PC-3 (cell line): ENCODE measurements at regions of chr4 and their contacts with region 1.

Region 1: GRCh38 chr4:73446336-73446938 is 10.4 kb downstream of the AFP start:
- DNase-seq: peak; percentile 83
- ATAC-seq: peak; percentile 74
- H3K4me3 ChIP-seq: no peak overlapping the region
- H3K27ac ChIP-seq: no peak overlapping the region
- H3K4me1 ChIP-seq: peaks cover 24% of the 10 kb centered on the region
- H3K27me3 ChIP-seq: peaks cover 12% of the 10 kb centered on the region; the same call in 1 of the 2 replicates
- CTCF ChIP-seq: peak; percentile 98

Region 2: GRCh38 chr4:73308286-73308685 is 138.2 kb before region 1 on chr4:
- CTCF ChIA-PET with region 1: interaction called, 7 read pairs
- POLR2A ChIA-PET with region 1: no interaction called
- intact Hi-C with region 1: loop called (anchors 1 kb)
- DNase-seq: peak; percentile 53
- ATAC-seq: peak; percentile 69
- H3K4me3 ChIP-seq: no peak overlapping the region
- H3K27ac ChIP-seq: no peak overlapping the region
- H3K4me1 ChIP-seq: peaks cover 11% of the 10 kb centered on the region
- H3K27me3 ChIP-seq: no peaks in the 10 kb centered on the region
- CTCF ChIP-seq: peak; percentile 60; the same call in 1 of the 2 replicates

Region 3: GRCh38 chr4:73341454-73341853 is 105.0 kb before region 1 on chr4:
- CTCF ChIA-PET with region 1: interaction called, 29 read pairs
- POLR2A ChIA-PET with region 1: no interaction called
- intact Hi-C with region 1: loop called (anchors 1 kb)
- DNase-seq: peak; percentile 77
- ATAC-seq: peak; percentile 96
- H3K4me3 ChIP-seq: no peak overlapping the region
- H3K27ac ChIP-seq: no peak overlapping the region
- H3K4me1 ChIP-seq: no peaks in the 10 kb centered on the region
- H3K27me3 ChIP-seq: no peaks in the 10 kb centered on the region
- CTCF ChIP-seq: peak; percentile 82

Region 4: GRCh38 chr4:73392936-73393335 is 53.5 kb before region 1 on chr4:
- CTCF ChIA-PET with region 1: no interaction called
- POLR2A ChIA-PET with region 1: no interaction called
- intact Hi-C with region 1: loop called (anchors 5 kb)
- DNase-seq: no peak
- ATAC-seq: no peak
- H3K4me3 ChIP-seq: no peak overlapping the region
- H3K27ac ChIP-seq: no peak overlapping the region
- H3K4me1 ChIP-seq: no peaks in the 10 kb centered on the region
- H3K27me3 ChIP-seq: peaks cover 55% of the 10 kb centered on the region
- CTCF ChIP-seq: no peak